ENCODE measurements at regions of chr1 and their contacts with region 1.

Region 1: GRCh38 chr1:171313835-171314320 is at the start of gene FMO4:
- DNase-seq: peak; percentile 35 to 94 (median 90)
- ATAC-seq: peak; percentile 100
- H3K4me3 ChIP-seq: peak within 1 kb of the TSS; percentile 26
- H3K4me3 Mint-ChIP-seq: peak within 1 kb of the TSS; percentile 35 to 86 (median 81)
- H3K27ac ChIP-seq: peak within 1 kb of the TSS; percentile 56
- H3K27ac Mint-ChIP-seq: peak within 1 kb of the TSS; percentile 73 to 96 (median 90)
- H3K4me1 ChIP-seq: peaks cover 5 to 7% of the 10 kb centered on the region in 2 donors
- H3K4me1 Mint-ChIP-seq: peaks cover 4 to 34% (median 26%) of the 10 kb centered on the region in 7 donors
- H3K27me3 ChIP-seq: no peaks in the 10 kb centered on the region
- H3K27me3 Mint-ChIP-seq: no peaks in the 10 kb centered on the region
- total RNA-seq, gene FMO4: 1.2 to 3.7 (median 3.3) TPM

Region 2: GRCh38 chr1:170010443-170010842 is 1303.4 kb before region 1 on chr1:
- CTCF ChIA-PET with region 1: no interaction called
- POLR2A ChIA-PET with region 1: no interaction called
- intact Hi-C with region 1: loop called in 1 of 2 experiments (anchors 10 kb)
- DNase-seq: peak in 4 of 9 donors; percentile 3 to 25 (median 4)
- ATAC-seq: no peak
- H3K4me3 ChIP-seq: no peak overlapping the region
- H3K4me3 Mint-ChIP-seq: no peak overlapping the region
- H3K27ac ChIP-seq: no peak overlapping the region
- H3K27ac Mint-ChIP-seq: no peak overlapping the region
- H3K4me1 ChIP-seq: no peaks in the 10 kb centered on the region
- H3K4me1 Mint-ChIP-seq: peaks cover 0 to 5% (median 0%) of the 10 kb centered on the region in 7 donors
- H3K27me3 ChIP-seq: no peaks in the 10 kb centered on the region
- H3K27me3 Mint-ChIP-seq: no peaks in the 10 kb centered on the region

Region 3: GRCh38 chr1:170685166-170685565 is 628.7 kb before region 1 on chr1:
- CTCF ChIA-PET with region 1: interaction called, 5 read pairs
- POLR2A ChIA-PET with region 1: no interaction called
- intact Hi-C with region 1: loop called in 1 of 2 experiments (anchors 5 kb)
- DNase-seq: no peak
- ATAC-seq: no peak
- H3K4me3 ChIP-seq: no peak overlapping the region
- H3K4me3 Mint-ChIP-seq: no peak overlapping the region
- H3K27ac ChIP-seq: no peak overlapping the region
- H3K27ac Mint-ChIP-seq: no peak overlapping the region
- H3K4me1 ChIP-seq: no peaks in the 10 kb centered on the region
- H3K4me1 Mint-ChIP-seq: peaks cover 0 to 5% (median 0%) of the 10 kb centered on the region in 7 donors
- H3K27me3 ChIP-seq: no peaks in the 10 kb centered on the region
- H3K27me3 Mint-ChIP-seq: peaks cover 15 to 54% (median 29%) of the 10 kb centered on the region in 5 donors

Region 4: DNA sequence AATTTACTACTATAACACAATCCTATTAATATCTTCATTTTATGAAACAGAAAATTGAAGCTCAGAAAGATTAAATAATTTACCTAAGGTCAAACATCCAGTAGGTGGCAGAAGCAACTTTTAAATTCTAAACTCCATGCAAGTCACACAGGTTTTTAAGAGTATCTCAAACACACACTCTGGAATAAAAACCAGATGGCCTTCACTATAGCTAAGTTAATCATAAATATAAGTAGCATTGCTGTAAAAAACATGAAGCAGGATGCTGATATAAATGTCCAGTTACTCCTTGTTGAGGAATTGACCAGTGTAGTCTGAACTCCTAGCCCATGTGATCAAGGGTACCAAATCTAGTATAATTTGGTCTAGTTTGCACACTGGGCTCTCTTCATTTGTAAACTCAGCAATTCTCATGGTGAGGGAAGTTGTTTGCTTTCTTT is 232.5 kb before region 1 on chr1:
- CTCF ChIA-PET with region 1: interaction called, 7 read pairs
- POLR2A ChIA-PET with region 1: no interaction called
- intact Hi-C with region 1: loop called in 1 of 2 experiments (anchors 5 kb)
- DNase-seq: no peak
- ATAC-seq: no peak
- H3K4me3 ChIP-seq: no peak overlapping the region
- H3K4me3 Mint-ChIP-seq: no peak overlapping the region
- H3K27ac ChIP-seq: no peak overlapping the region
- H3K27ac Mint-ChIP-seq: no peak overlapping the region
- H3K4me1 ChIP-seq: no peaks in the 10 kb centered on the region
- H3K4me1 Mint-ChIP-seq: no peaks in the 10 kb centered on the region
- H3K27me3 ChIP-seq: no peaks in the 10 kb centered on the region
- H3K27me3 Mint-ChIP-seq: peaks cover 0 to 28% (median 13%) of the 10 kb centered on the region in 5 donors

Region 5: DNA sequence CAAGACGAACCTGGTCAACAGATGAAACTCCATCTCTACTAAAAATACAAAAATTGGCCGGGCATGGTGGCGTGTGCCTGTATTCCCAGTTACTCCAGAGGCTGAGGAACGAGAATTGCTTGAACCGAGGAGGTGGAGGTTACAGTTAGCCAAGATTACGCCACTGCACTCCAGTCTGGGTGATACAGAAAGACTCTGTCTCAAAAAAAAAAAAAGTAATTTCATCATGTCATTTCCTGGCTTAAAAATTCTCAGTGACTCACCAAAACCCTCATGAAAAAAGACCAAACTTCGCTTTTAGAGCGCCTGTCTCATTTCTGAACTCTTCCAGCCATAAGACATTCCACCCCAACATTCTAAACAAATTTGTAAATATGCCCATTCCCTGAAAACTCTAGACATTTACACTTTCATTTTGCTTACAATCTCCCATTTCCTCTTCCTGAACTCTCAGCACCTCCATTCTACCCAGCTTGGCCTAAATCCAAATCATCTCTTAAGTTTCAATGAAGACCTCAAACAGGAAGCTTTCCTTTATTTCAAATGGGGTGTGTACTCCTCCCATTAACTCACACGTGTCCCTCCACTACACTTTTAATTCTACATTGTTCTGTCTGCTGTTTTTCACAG is 121.0 kb after region 1 on chr1:
- CTCF ChIA-PET with region 1: no interaction called
- POLR2A ChIA-PET with region 1: no interaction called
- intact Hi-C with region 1: loop called in 1 of 2 experiments (anchors 2 kb)
- DNase-seq: peak in 7 of 9 donors; percentile 1 to 30 (median 11)
- ATAC-seq: peak; percentile 54
- H3K4me3 ChIP-seq: no peak overlapping the region
- H3K4me3 Mint-ChIP-seq: peak overlapping the region; percentile 22 to 77 (median 74)
- H3K27ac ChIP-seq: no peak overlapping the region
- H3K27ac Mint-ChIP-seq: peak overlapping the region; percentile 43 to 86 (median 78)
- H3K4me1 ChIP-seq: no peaks in the 10 kb centered on the region
- H3K4me1 Mint-ChIP-seq: peaks cover 10 to 24% (median 19%) of the 10 kb centered on the region in 7 donors
- H3K27me3 ChIP-seq: no peaks in the 10 kb centered on the region
- H3K27me3 Mint-ChIP-seq: peaks cover 0 to 6% (median 2%) of the 10 kb centered on the region in 5 donors

Region 6: GRCh38 chr1:171841050-171841940 is 527.4 kb after region 1 on chr1 and contains the start of gene DNM3:
- CTCF ChIA-PET with region 1: no interaction called
- POLR2A ChIA-PET with region 1: no interaction called
- intact Hi-C with region 1: loop called in 1 of 2 experiments (anchors 1 kb)
- DNase-seq: peak; percentile 71 to 90 (median 86)
- ATAC-seq: peak; percentile 97
- H3K4me3 ChIP-seq: peak within 1 kb of the TSS; percentile 80
- H3K4me3 Mint-ChIP-seq: peak within 1 kb of the TSS; percentile 85 to 93 (median 90)
- H3K27ac ChIP-seq: peak within 1 kb of the TSS; percentile 64
- H3K27ac Mint-ChIP-seq: peak within 1 kb of the TSS; percentile 76 to 95 (median 83)
- H3K4me1 ChIP-seq: peaks cover 0 to 6% of the 10 kb centered on the region in 2 donors
- H3K4me1 Mint-ChIP-seq: peaks cover 15 to 19% (median 18%) of the 10 kb centered on the region in 7 donors
- H3K27me3 ChIP-seq: peaks cover 3 to 16% of the 10 kb centered on the region in 2 donors
- H3K27me3 Mint-ChIP-seq: peaks cover 12 to 44% (median 16%) of the 10 kb centered on the region in 5 donors
- total RNA-seq, gene DNM3: 1.9 to 2.5 (median 2.1) TPM

Measured in naive thymus-derived CD4-positive, alpha-beta T cell (primary cell).